Dorsolateral prefrontal cortex (tissue), 120 donors: ENCODE measurements at regions of chr17 and their contacts with region 1.

Region 1: GRCh38 chr17:44070455-44071197 is at the start of gene G6PC3:
- DNase-seq: peak; percentile 93 to 97 (median 96)
- H3K4me3 ChIP-seq: peak within 1 kb of the TSS; percentile 57 to 96 (median 84)
- H3K27ac ChIP-seq: peak within 1 kb of the TSS; percentile 57 to 97 (median 90)
- H3K27me3 ChIP-seq: no peaks in the 10 kb centered on the region
- CTCF ChIP-seq: peak in 49 of 56 donors; percentile 10 to 59 (median 37)
- total RNA-seq, gene G6PC3: 29.8 to 60.2 (median 41.8) TPM

Region 2: GRCh38 chr17:44014437-44015172 is 56.0 kb before region 1 on chr17 and contains the start of gene TMEM101:
- intact Hi-C with region 1: loop called (anchors 1 to 2 kb)
- DNase-seq: peak; percentile 85 to 94 (median 91)
- H3K4me3 ChIP-seq: peak within 1 kb of the TSS; percentile 62 to 99 (median 91)
- H3K27ac ChIP-seq: peak within 1 kb of the TSS in 57 of 59 donors; percentile 13 to 95 (median 84)
- H3K27me3 ChIP-seq: no peaks in the 10 kb centered on the region
- CTCF ChIP-seq: peak in 43 of 56 donors; percentile 9 to 70 (median 40)
- total RNA-seq, gene TMEM101: 13.5 to 26.7 (median 19.9) TPM

Region 3: DNA sequence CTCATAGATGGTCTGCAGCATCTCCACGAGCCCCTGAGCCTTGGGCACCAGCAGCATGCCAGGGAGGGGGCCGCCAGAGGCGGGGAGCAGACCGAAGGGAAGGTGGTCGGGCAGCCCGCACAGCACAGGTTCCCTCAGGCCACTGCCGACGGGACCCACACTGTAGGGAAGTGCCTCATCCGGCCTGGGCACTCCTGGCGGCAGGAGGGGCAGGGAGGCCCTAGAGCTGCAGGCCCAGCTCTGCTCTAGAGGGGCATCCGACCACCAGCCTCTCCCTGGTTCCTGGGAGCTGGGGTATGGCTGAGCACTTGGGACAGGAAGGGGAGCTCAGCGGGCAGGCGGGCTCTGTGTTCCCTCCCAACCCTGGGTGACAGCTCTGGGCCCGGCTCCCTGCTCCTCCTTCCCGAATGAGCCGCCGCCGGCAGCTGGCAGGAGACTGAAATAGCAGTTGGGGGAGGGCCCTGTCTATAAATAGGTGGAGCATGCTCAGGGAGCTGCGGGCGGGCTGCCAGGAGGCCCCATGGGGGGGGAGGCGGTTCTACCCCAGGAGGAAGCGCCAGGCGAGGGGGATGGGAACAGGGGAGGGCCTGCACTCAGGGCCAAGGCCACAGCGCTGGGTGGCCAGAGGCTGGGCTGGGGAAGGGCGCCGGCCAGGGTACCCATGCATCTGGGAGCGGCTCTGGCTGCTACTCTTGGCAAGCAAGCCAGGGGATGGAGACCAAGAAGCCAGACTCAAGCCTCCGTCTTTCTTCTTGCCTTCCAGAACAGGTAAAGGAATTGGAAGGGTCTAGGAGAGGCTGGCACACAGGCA is 40.4 kb after region 1 on chr17:
- intact Hi-C with region 1: loop called (anchors 5 kb)
- DNase-seq: peak; percentile 85 to 99 (median 97)
- H3K4me3 ChIP-seq: peak overlapping the region; percentile 23 to 72 (median 53)
- H3K27ac ChIP-seq: peak overlapping the region; percentile 72 to 98 (median 92)
- H3K27me3 ChIP-seq: no peaks in the 10 kb centered on the region
- CTCF ChIP-seq: peak in 28 of 56 donors; percentile 8 to 58 (median 34)